Activated CD4-positive, alpha-beta T cell treated with anti-CD3 and anti-CD28 coated beads, Interleukin-2, amount 10 ng/mL, durations not matched to agents 24 days and 14 days (primary cell): ENCODE measurements at regions of chr21 and their contacts with region 1.

Region 1: DNA sequence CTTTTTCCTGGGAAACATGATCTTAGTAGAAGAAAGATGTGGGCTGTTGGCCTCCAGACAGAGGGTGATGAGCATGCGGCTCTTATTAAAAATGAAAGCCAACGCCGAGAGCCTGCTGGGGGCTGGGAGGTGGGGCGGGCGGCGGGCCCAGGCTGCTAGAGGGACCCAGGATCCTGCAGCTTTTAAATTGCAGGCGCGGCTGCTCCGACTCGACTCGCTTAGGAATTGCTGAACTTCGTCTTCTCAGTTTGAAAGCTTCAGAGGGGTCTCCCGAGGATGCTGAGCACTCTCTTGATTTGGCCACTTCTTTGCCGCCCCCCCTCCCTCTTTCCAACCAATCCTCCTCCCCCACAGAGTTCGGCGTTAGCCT is 1.2 kb downstream of the AGPAT3 start:
- DNase-seq: peak; percentile 77
- H3K4me3 Mint-ChIP-seq: peak overlapping the region; percentile 90
- H3K27ac Mint-ChIP-seq: peak overlapping the region; percentile 94
- H3K4me1 Mint-ChIP-seq: peaks cover 36% of the 10 kb centered on the region
- H3K27me3 Mint-ChIP-seq: no peaks in the 10 kb centered on the region

Region 2: GRCh38 chr21:43597052-43597451 is 269.2 kb before region 1 on chr21:
- intact Hi-C with region 1: no loop called
- DNase-seq: no peak
- H3K4me3 Mint-ChIP-seq: no peak overlapping the region
- H3K27ac Mint-ChIP-seq: no peak overlapping the region
- H3K4me1 Mint-ChIP-seq: peaks cover 6% of the 10 kb centered on the region
- H3K27me3 Mint-ChIP-seq: peaks cover 28% of the 10 kb centered on the region

Region 3: DNA sequence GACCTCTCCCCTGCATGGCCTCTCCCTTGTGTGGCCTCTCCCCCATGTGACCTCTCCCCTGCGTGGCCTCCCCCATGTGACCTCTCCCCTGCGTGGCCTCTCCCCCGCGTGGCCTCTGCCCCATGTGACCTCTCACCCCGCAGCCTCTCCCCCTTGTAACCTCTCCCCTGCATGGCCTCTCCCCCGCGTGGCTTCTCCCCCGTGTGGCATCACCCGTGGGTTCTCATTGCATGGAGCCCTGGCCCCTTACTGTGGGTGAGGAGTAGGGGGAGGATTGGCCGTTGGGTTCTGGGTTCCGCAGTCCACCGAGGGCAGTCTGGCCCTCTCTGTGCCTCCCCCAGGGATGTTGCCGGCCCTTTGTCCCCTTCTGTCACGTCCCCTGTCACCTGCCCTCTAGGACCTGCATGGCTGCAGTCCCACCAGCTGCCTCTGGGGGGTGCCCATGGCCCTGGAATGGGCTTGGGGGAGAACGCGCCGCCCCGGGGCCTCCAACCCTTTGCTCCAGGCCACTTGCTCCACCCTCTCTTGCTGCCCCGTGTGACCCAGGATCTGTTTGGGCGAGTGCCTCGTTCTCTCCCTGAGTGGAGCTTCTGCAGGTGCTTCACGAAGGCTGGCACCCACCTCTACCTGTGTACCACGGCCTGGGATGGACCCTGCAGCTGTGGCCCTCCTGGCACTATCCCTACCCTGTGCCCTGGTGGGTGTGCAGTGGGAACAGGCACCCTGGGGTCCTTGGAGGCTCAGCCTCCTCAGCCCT is 55.6 kb before region 1 on chr21:
- intact Hi-C with region 1: loop called (anchors 2 kb)
- DNase-seq: peak; percentile 98
- H3K4me3 Mint-ChIP-seq: no peak overlapping the region
- H3K27ac Mint-ChIP-seq: peak overlapping the region; percentile 56
- H3K4me1 Mint-ChIP-seq: peaks cover 13% of the 10 kb centered on the region
- H3K27me3 Mint-ChIP-seq: no peaks in the 10 kb centered on the region

Region 4: GRCh38 chr21:43854773-43855633 is 11.2 kb before region 1 on chr21:
- intact Hi-C with region 1: loop called (anchors 1 kb)
- DNase-seq: peak; percentile 92
- H3K4me3 Mint-ChIP-seq: peak overlapping the region; percentile 74
- H3K27ac Mint-ChIP-seq: peak overlapping the region; percentile 90
- H3K4me1 Mint-ChIP-seq: peaks cover 29% of the 10 kb centered on the region
- H3K27me3 Mint-ChIP-seq: no peaks in the 10 kb centered on the region

Region 5: DNA sequence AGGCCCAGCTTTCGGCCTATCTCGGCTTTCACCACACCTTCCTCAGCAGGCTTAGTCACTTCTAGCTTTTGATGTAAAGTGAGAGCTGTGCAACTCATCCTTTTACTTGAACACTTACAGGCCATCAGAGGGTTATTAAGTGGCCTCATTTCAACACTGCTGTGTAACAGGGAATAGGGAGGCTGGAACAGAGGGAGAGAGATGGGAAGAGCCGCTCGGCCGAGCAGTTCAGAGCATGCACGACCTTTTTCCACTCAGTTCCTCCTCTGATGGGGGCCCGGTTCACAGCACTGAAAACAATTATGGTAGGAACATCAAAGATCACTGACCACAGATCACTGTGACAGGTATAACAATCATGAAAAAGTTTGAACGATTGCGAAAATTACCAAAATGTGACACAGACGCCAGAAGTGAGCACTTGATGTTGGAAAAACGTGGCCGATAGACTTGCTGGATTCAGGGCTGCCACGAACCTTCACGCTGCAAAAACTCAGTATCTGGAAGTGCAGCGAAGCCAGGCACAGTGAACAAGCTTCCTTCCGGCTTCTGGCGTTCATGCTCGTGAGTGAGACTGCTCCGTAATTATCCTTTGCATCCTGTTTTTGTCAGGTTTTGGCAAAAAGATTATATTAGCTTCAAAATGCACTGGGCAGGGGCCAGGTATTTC is 27.4 kb after region 1 on chr21:
- intact Hi-C with region 1: loop called (anchors 2 kb)
- DNase-seq: peak; percentile 72
- H3K4me3 Mint-ChIP-seq: peak overlapping the region; percentile 56
- H3K27ac Mint-ChIP-seq: peak overlapping the region; percentile 80
- H3K4me1 Mint-ChIP-seq: peaks cover 31% of the 10 kb centered on the region
- H3K27me3 Mint-ChIP-seq: no peaks in the 10 kb centered on the region

Region 6: GRCh38 chr21:43916691-43917514 is 50.7 kb after region 1 on chr21:
- intact Hi-C with region 1: loop called (anchors 2 kb)
- DNase-seq: peak; percentile 90
- H3K4me3 Mint-ChIP-seq: peak overlapping the region; percentile 87
- H3K27ac Mint-ChIP-seq: peak overlapping the region; percentile 89
- H3K4me1 Mint-ChIP-seq: peaks cover 56% of the 10 kb centered on the region
- H3K27me3 Mint-ChIP-seq: peaks cover 2% of the 10 kb centered on the region

Region 7: GRCh38 chr21:43938751-43939442 is 72.7 kb after region 1 on chr21:
- intact Hi-C with region 1: loop called (anchors 2 kb)
- DNase-seq: peak; percentile 97
- H3K4me3 Mint-ChIP-seq: peak overlapping the region; percentile 74
- H3K27ac Mint-ChIP-seq: peak overlapping the region; percentile 78
- H3K4me1 Mint-ChIP-seq: peaks cover 18% of the 10 kb centered on the region
- H3K27me3 Mint-ChIP-seq: no peaks in the 10 kb centered on the region

Region 8: DNA sequence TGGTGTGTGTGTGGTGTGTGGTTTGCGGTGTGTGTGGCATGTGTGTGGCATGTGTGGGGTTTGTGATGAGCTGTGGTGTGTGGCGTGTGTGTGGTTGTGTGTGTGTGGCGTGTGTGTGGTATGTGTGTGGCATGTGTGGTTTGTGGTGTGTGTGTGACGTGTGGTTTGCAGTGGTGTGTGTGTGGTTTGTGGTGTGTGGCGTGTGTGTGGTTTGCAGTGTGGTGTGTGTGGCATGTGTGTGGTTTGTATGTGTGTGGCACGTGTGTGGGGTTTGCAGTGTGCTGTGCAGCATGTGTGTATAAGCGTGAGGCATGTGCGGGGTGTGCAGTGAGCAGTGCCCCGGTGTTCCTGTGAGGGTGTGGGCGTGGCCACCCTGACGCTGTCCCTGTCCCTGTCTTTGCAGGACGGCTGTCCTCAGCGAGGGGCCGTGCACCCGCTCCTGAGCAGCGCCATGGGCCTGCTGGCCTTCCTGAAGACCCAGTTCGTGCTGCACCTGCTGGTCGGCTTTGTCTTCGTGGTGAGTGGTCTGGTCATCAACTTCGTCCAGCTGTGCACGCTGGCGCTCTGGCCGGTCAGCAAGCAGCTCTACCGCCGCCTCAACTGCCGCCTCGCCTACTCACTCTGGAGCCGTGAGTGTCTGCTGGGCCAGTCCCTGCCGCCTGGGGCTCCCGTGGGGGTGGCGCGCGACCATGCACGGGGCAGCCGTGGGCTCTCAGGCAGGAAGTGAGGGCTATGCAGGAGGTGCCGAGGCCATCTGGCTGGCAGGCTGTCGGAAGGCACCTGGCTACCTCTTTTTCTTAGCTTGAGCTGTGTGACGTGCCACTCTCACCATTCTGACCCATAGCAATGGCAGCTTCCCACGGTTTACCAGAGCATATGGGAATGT is 93.2 kb after region 1 on chr21:
- intact Hi-C with region 1: no loop called
- DNase-seq: peak; percentile 66
- H3K4me3 Mint-ChIP-seq: no peak overlapping the region
- H3K27ac Mint-ChIP-seq: no peak overlapping the region
- H3K4me1 Mint-ChIP-seq: peaks cover 8% of the 10 kb centered on the region
- H3K27me3 Mint-ChIP-seq: no peaks in the 10 kb centered on the region